ENCODE measurements at regions of chr3 and their contacts with region 1.

Region 1: GRCh38 chr3:108090701-108091451 is at the start of gene CD47:
- DNase-seq: peak; percentile 75 to 97
- H3K4me3 ChIP-seq: peak within 1 kb of the TSS; percentile 92 to 100
- H3K27ac ChIP-seq: peak within 1 kb of the TSS; percentile 86 to 96
- H3K4me1 ChIP-seq: peaks cover 0 to 6% of the 10 kb centered on the region in 2 donors
- H3K27me3 ChIP-seq: no peaks in the 10 kb centered on the region
- CTCF ChIP-seq: no peak
- total RNA-seq, gene CD47: 24.5 TPM

Region 2: GRCh38 chr3:107235928-107236315 is 855.0 kb before region 1 on chr3:
- intact Hi-C with region 1: loop called (anchors 10 kb)
- DNase-seq: no peak
- H3K4me3 ChIP-seq: peak overlapping the region; percentile 49 to 70
- H3K27ac ChIP-seq: peak overlapping the region; percentile 15 to 58
- H3K4me1 ChIP-seq: peaks cover 0 to 6% of the 10 kb centered on the region in 2 donors
- H3K27me3 ChIP-seq: no peaks in the 10 kb centered on the region
- CTCF ChIP-seq: peak; percentile 66 to 88 (median 85)

Region 3: GRCh38 chr3:107522510-107523288 is 568.2 kb before region 1 on chr3 and contains the start of gene BBX:
- intact Hi-C with region 1: loop called (anchors 10 kb)
- DNase-seq: peak; percentile 85 to 98
- H3K4me3 ChIP-seq: peak within 1 kb of the TSS; percentile 94 to 95
- H3K27ac ChIP-seq: peak within 1 kb of the TSS; percentile 96 to 98
- H3K4me1 ChIP-seq: peaks cover 0 to 11% of the 10 kb centered on the region in 2 donors
- H3K27me3 ChIP-seq: no peaks in the 10 kb centered on the region
- CTCF ChIP-seq: no peak
- total RNA-seq, gene BBX: 18.0 TPM

Region 4: GRCh38 chr3:107956991-107957900 is 133.6 kb before region 1 on chr3:
- intact Hi-C with region 1: loop called (anchors 1 kb)
- DNase-seq: peak; percentile 26 to 93
- H3K4me3 ChIP-seq: peak overlapping the region; percentile 14 to 57
- H3K27ac ChIP-seq: peak overlapping the region; percentile 80 to 83
- H3K4me1 ChIP-seq: peaks cover 9 to 11% of the 10 kb centered on the region in 2 donors
- H3K27me3 ChIP-seq: no peaks in the 10 kb centered on the region
- CTCF ChIP-seq: no peak

Region 5: DNA sequence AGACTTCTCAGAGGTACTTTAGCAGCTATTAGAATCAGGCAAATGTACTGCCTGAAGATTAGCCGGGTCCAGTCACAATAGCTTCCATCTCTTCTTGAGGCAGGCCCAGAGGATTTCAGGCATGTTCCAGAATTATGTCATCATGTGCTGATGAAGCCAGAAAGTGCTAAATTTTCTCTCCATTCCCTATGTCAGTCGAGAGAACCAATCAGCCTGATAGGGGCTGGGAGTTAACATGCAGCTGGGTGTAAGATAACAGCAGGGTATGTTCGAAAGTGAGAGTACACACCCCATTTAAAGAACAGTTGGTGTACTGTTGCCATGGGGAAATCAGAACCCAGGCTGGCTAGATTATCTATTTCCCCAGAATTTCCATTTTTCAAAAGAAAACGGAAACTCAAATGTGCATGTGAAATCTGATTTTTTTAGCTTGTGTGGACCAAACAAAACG is 370.8 kb after region 1 on chr3:
- intact Hi-C with region 1: no loop called
- DNase-seq: no peak
- H3K4me3 ChIP-seq: no peak overlapping the region
- H3K27ac ChIP-seq: no peak overlapping the region
- H3K4me1 ChIP-seq: no peaks in the 10 kb centered on the region
- H3K27me3 ChIP-seq: no peaks in the 10 kb centered on the region
- CTCF ChIP-seq: no peak

Region 6: DNA sequence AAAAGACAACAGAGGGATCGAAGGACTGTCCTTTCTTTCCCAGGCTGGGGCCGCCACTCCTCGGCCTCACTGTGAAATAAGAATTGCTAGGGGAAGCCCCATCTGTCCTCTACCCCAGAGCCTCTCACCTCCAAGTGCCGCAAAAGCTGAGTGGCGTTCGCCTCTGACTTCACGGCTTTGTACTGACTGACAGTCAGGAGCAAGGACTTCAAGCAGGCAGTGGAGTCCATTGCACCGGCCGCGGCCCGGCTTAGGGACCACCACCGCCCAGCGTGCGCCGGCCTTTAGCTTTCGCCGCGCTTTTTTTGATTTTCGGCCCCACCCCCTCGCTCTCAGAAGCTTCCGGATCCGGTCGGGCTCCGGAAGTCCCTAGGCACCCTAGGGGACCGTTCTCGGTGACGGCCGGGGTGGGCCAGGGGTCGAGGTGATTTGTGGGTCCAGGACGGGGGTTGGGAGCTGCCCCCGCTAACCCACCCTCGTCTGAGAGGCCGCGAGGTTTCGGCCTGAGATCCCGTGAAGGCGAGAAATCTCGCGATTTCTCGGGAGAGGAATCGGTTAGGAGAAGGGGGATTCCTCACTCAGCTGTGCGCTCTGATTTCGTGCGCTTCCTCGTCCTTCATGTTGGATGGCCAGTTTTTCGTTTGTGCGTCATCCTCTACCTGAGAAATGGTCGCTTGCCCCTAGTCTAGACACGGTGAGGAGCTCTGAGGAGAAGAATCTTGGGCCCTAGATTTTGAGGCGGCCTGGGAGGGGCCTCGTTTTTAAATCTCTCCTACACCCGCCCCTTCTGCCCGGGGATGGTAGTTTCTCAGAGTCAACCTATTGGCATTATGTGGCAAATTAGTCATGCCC is 498.5 kb after region 1 on chr3 and contains the starts of genes CIP2A and DZIP3:
- intact Hi-C with region 1: loop called (anchors 10 kb)
- DNase-seq: peak; percentile 20 to 88
- H3K4me3 ChIP-seq: peak within 1 kb of the TSS; percentile 70 to 71
- H3K27ac ChIP-seq: peak within 1 kb of the TSS; percentile 93
- H3K4me1 ChIP-seq: peaks cover 0 to 2% of the 10 kb centered on the region in 2 donors
- H3K27me3 ChIP-seq: no peaks in the 10 kb centered on the region
- CTCF ChIP-seq: no peak
- total RNA-seq, gene CIP2A: not detected
- total RNA-seq, gene DZIP3: 7.0 TPM